ENCODE measurements at regions of chr5 and their contacts with region 1.

Region 1: DNA sequence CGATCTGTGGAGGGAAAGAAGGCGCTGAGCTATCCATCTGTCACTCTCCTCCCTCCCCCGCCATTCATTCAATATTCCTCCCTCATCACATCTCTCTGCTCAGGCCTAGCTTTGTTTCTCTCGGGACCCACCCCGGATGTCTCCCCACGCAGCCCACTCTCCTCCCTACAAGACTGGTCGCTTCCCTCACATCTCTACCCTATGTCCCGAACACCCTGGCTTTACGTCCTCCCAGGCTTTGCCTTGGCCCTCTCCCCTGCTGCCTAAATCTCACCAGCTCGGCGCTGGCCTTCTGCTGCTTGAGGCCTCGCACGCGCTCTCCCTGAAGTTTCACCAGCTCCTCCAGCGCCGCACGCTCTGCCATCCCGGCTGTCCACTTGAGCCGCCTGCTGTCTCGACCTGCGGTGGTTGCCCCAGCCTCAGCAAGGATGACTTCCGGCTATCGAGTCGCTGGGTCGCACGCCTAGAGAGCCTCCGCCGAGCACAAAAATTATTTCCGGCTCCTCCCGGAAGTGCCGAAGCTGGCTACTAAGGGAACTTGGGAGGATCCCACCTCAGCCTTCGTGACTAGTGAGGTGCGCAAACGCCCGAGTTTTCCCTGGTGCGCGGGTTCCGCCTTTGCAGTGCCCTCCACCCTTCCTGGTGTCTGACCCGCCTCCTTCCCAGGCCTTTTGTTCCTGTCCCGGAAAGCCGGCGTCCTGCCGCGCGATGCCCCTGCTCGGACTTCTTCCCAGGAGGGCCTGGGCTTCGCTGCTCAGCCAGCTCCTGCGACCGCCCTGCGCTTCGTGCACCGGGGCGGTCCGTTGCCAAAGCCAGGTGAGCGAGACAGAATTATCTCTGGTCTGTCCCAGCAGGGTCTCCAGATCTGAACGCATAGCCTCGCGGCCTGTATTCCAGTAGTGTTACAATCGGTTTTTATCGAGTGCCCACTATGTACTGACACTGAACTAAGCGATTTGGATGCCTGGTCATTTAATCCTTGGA is at the starts of genes HARS1 and HARS2:
- DNase-seq: peak; percentile 97 to 98
- ATAC-seq: peak; percentile 98 to 99
- H3K4me3 ChIP-seq: peak within 1 kb of the TSS; percentile 81
- H3K27ac ChIP-seq: peak within 1 kb of the TSS; percentile 90 to 91
- H3K4me1 ChIP-seq: peaks cover 17% of the 10 kb centered on the region
- CTCF ChIP-seq: no peak
- EP300 ChIP-seq: no peak
- POLR2A ChIP-seq: peak; percentile 93
- RAD21 ChIP-seq: peak in 1 of 2 experiments; percentile 28; a peak in 1 of 5 replicates
- polyA plus RNA-seq, gene HARS1: 73.0 and 80.5 TPM in 2 replicates
- polyA plus RNA-seq, gene HARS2: 46.6 and 55.1 TPM in 2 replicates

Region 2: DNA sequence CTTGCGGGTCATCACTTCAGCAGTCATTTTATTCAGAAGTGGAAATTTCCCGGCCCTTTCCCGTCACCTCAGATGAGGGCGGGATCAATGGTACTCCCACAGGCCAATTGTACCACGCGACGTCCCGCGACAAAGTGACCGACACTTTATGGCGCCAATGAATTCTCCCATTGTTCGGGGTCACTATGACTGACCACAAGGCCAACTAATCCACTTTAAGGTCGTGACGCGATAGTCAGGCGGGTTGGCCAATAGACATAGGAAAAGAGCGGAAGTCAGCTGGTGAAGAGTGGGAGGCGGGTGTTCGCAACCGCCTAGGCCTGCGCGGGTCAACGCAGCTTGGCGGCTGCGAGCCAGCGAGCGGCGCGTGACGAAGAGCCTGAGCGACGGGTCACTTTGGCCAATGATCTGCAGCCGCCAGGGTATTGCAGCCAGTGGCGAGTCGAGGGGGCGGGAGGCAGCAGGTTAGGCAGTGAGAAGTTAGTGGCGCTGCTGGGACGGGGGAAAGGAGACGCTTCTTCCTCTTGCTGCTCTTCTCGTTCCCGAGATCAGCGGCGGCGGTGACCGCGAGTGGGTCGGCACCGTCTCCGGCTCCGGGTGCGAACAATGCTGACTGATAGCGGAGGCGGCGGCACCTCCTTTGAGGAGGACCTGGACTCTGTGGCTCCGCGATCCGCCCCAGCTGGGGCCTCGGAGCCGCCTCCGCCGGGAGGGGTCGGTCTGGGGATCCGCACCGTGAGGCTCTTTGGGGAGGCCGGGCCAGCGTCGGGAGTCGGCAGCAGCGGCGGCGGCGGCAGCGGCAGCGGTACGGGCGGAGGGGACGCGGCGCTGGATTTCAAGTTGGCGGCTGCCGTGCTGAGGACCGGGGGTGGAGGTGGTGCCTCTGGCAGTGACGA is 289.6 kb before region 1 on chr5 and contains the start of gene ANKHD1:
- CTCF ChIA-PET with region 1: no interaction called
- POLR2A ChIA-PET with region 1: interaction called, 11 read pairs
- DNase-seq: peak; percentile 97 to 100
- ATAC-seq: peak; percentile 83 to 86
- H3K4me3 ChIP-seq: peak within 1 kb of the TSS; percentile 65
- H3K27ac ChIP-seq: peak within 1 kb of the TSS; percentile 91 to 95
- H3K4me1 ChIP-seq: peaks cover 37% of the 10 kb centered on the region
- CTCF ChIP-seq: no peak
- EP300 ChIP-seq: no peak
- POLR2A ChIP-seq: peak; percentile 85
- RAD21 ChIP-seq: no peak
- polyA plus RNA-seq, gene ANKHD1: 94.1 and 111 TPM in 2 replicates

Region 3: GRCh38 chr5:140664359-140665119 is 26.7 kb before region 1 on chr5 and contains the start of gene WDR55:
- CTCF ChIA-PET with region 1: interaction called, 5 read pairs
- POLR2A ChIA-PET with region 1: interaction called, 11 read pairs
- DNase-seq: peak; percentile 94 to 97
- ATAC-seq: peak; percentile 97 to 99
- H3K4me3 ChIP-seq: peak within 1 kb of the TSS; percentile 83
- H3K27ac ChIP-seq: peak within 1 kb of the TSS; percentile 84 to 94
- H3K4me1 ChIP-seq: peaks cover 18% of the 10 kb centered on the region; the same call in 1 of the 3 replicates
- CTCF ChIP-seq: no peak
- EP300 ChIP-seq: no peak
- POLR2A ChIP-seq: peak; percentile 95
- RAD21 ChIP-seq: no peak
- polyA plus RNA-seq, gene WDR55: 23.3 and 26.6 TPM in 2 replicates

Region 4: DNA sequence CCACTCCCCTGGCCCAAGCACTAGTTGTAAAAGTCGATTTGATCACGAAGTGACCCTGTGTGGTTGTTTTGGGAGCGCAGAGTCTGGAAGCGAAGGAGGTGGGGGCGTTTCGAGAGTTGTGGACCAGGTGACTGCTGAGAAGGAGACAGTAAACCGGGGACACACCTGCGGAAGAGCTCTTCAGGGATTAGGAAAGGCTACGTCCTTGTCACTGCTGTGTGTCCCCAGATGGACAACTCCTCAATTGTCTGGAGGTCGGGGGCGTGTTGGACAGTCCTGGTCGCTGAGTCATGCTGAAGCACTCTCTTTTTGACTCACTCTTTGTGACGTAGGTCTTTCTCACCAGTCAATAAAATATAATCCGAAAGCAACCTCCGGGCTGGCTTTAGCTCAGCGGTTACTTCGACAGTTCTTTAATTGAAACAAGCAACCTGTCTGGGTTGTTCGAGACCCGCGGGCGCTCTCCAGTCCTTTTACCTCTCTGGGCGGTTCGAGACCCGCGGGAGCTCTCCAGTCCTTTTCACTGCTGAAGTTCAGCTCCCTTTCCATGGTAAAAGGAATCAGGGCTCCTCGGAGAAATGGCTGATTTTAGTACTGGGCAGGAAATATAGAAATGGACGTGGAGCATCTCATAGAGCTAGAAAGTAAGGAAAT is 19.8 kb after region 1 on chr5:
- CTCF ChIA-PET with region 1: interaction called, 3 read pairs
- POLR2A ChIA-PET with region 1: interaction called, 22 read pairs
- DNase-seq: peak; percentile 94 to 98
- ATAC-seq: peak; percentile 94 to 96
- H3K4me3 ChIP-seq: peak overlapping the region; percentile 46
- H3K27ac ChIP-seq: peak overlapping the region; percentile 81 to 93
- H3K4me1 ChIP-seq: peaks cover 9% of the 10 kb centered on the region; the same call in 2 of the 3 replicates
- CTCF ChIP-seq: no peak
- EP300 ChIP-seq: peak in 1 of 2 experiments; percentile 20; a peak in 1 of 5 replicates
- POLR2A ChIP-seq: peak; percentile 46
- RAD21 ChIP-seq: no peak

Region 5: DNA sequence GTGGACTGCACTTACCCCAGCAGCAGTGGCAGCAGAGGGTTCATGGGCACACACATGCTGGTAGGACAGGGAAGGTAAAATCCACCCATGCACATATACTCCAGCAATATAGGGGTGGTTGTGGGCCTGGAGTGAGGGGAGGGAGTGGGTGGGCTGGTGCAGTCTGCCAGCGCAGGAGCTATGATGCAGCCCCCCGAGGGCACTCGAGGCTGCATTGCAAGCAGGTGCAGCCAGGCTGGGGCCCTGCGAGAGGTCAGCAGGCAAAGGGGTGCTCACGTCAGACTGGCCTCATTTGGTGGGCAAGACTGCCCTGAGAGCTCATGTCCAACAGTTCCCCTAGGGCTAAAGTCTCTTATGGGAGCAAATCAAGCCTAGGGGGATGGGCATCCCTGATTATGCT is 62.3 kb after region 1 on chr5:
- CTCF ChIA-PET with region 1: no interaction called
- POLR2A ChIA-PET with region 1: no interaction called
- DNase-seq: no peak
- ATAC-seq: no peak
- H3K4me3 ChIP-seq: no peak overlapping the region
- H3K27ac ChIP-seq: no peak overlapping the region
- H3K4me1 ChIP-seq: no peaks in the 10 kb centered on the region
- CTCF ChIP-seq: no peak
- EP300 ChIP-seq: no peak
- POLR2A ChIP-seq: no peak
- RAD21 ChIP-seq: no peak

Region 6: DNA sequence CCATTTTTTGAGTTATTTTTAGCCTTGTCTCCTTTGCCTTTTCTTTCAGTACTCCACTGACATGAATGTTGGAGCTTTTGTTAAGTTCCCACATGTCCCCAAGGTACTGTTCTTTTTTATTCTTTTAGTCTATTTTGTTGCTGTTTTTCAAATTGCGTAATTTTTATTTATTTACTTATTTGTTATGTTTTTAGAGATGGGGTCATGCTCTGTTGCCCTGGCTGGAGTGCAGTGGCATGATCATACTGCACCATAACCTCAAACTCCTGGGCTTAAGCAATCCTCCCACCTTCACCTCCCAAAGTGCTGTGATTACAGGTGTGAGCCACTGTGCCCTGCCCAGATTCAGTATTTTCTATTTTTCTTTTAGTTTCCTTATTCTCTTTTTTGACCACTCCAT is 89.3 kb after region 1 on chr5:
- CTCF ChIA-PET with region 1: no interaction called
- POLR2A ChIA-PET with region 1: no interaction called
- DNase-seq: no peak
- ATAC-seq: no peak
- H3K4me3 ChIP-seq: no peak overlapping the region
- H3K27ac ChIP-seq: no peak overlapping the region
- H3K4me1 ChIP-seq: no peaks in the 10 kb centered on the region
- CTCF ChIP-seq: no peak
- EP300 ChIP-seq: no peak
- POLR2A ChIP-seq: no peak
- RAD21 ChIP-seq: no peak

Measured in A549 (cell line).